ENCODE measurements at regions of chr3 and their contacts with region 1.

Region 1: GRCh38 chr3:15629860-15630597 is 28.5 kb downstream of the BTD start:
- DNase-seq: peak; percentile 69
- ATAC-seq: peak; percentile 93

Region 2: GRCh38 chr3:16247276-16248061 is 617.4 kb after region 1 on chr3:
- intact Hi-C with region 1: loop called (anchors 10 kb)
- DNase-seq: peak; percentile 88
- ATAC-seq: peak; percentile 85

Region 3: GRCh38 chr3:16789344-16790120 is 1159.5 kb after region 1 on chr3:
- intact Hi-C with region 1: no loop called
- DNase-seq: no peak
- ATAC-seq: no peak